AG04450 (cell line): ENCODE measurements at regions of chr9 and their contacts with region 1.

Region 1: DNA sequence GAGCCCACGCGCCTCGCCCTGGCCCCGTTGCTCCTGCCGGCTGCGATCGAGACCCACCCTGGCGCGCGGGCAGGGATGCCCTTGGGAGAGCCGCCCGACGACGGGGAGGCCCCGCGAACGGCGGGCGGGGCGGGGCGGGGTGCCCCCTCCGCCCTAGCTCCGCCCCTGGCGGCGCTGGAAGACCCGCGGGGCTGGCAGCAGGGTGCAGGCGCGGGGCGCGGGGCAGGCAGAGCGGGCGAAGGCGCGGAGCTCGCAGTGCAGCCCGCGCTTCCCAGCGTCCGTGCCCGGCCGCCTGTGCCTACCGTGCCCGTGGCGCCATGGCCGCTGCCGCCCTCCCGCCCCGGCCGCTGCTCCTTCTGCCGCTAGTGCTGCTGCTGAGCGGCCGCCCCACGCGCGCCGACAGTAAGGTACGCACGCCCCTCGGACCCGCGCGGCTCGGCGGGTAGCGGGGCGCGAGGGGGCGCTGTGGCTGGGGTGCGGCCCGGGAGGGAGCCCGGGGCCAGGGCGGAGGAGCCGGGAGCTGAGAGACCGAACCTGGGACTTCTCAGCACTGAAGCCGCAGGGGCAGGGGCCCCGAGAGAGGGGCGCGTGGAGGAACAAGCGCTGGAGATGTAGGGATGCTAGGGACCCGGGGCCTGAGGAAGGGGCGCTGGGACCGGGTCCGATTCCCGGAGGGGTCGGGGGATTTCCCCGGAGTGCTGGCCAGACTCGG is at the start of gene OLFML2A:
- DNase-seq: no peak
- H3K4me3 ChIP-seq: peak within 1 kb of the TSS; percentile 64
- H3K27ac ChIP-seq: peak within 1 kb of the TSS; percentile 21
- H3K27me3 ChIP-seq: no peaks in the 10 kb centered on the region
- CTCF ChIP-seq: peak; percentile 42
- polyA plus RNA-seq, gene OLFML2A: 22.3 and 34.4 TPM in 2 replicates

Region 2: GRCh38 chr9:124794902-124795491 is 17.9 kb after region 1 on chr9:
- CTCF ChIA-PET with region 1: interaction called, 12 read pairs
- POLR2A ChIA-PET with region 1: interaction called, 19 read pairs
- DNase-seq: no peak
- H3K4me3 ChIP-seq: no peak overlapping the region
- H3K27ac ChIP-seq: no peak overlapping the region
- H3K27me3 ChIP-seq: no peaks in the 10 kb centered on the region
- CTCF ChIP-seq: no peak

Region 3: GRCh38 chr9:124812401-124813016 is 35.4 kb after region 1 on chr9:
- CTCF ChIA-PET with region 1: interaction called, 14 read pairs
- POLR2A ChIA-PET with region 1: interaction called, 27 read pairs
- DNase-seq: peak; percentile 95
- H3K4me3 ChIP-seq: no peak overlapping the region
- H3K27ac ChIP-seq: peak overlapping the region; percentile 98
- H3K27me3 ChIP-seq: no peaks in the 10 kb centered on the region
- CTCF ChIP-seq: peak; percentile 18; the same call in 1 of the 2 replicates

Region 4: GRCh38 chr9:124839612-124840299 is 62.6 kb after region 1 on chr9:
- CTCF ChIA-PET with region 1: interaction called, 674 read pairs
- POLR2A ChIA-PET with region 1: interaction called, 11 read pairs
- DNase-seq: no peak
- H3K4me3 ChIP-seq: no peak overlapping the region
- H3K27ac ChIP-seq: no peak overlapping the region
- H3K27me3 ChIP-seq: no peaks in the 10 kb centered on the region
- CTCF ChIP-seq: peak; percentile 67

Region 5: GRCh38 chr9:124861342-124862229 is 84.5 kb after region 1 on chr9 and contains the starts of genes ARPC5L and RPL35:
- CTCF ChIA-PET with region 1: interaction called, 674 read pairs
- POLR2A ChIA-PET with region 1: interaction called, 26 read pairs
- DNase-seq: peak; percentile 72
- H3K4me3 ChIP-seq: peak within 1 kb of the TSS; percentile 95
- H3K27ac ChIP-seq: peak within 1 kb of the TSS; percentile 81
- H3K27me3 ChIP-seq: no peaks in the 10 kb centered on the region
- CTCF ChIP-seq: peak; percentile 19
- polyA plus RNA-seq, gene ARPC5L: 45.8 and 62.0 TPM in 2 replicates
- polyA plus RNA-seq, gene RPL35: 1,392 and 2,283 TPM in 2 replicates

Region 6: DNA sequence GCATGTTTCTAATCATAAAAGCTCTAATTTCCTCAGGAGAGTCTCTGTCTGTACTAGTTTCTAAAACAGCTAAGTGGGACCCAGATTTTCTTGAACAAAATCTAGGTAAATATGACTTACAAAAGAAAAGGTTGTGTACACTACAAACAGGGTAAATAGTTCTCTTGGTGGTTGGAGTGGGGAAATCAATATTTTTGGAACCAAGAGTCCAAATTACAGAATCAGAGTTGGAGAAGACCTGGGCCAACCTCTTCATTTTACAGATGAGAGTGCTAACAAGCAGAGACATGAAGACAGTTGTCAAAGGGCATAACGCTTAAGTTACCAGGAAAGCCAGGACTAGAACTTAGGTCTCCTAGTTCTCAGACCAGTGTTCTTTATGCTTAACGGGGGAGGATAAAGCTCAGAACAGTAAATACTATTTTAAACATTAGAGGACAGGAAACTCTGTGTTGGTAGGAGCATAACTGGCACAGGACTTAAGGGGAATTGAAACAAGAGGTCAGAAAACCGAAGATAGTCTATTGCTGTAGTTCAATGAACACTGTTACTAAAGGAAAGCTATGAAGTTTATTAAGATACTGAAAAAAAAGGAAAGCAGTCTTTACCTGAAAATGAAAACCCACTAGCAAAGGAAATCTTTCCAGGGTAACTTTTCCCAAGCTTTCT is 173.1 kb after region 1 on chr9:
- CTCF ChIA-PET with region 1: no interaction called
- POLR2A ChIA-PET with region 1: no interaction called
- DNase-seq: no peak
- H3K4me3 ChIP-seq: no peak overlapping the region
- H3K27ac ChIP-seq: no peak overlapping the region
- H3K27me3 ChIP-seq: no peaks in the 10 kb centered on the region
- CTCF ChIP-seq: no peak